Activated CD4-positive, alpha-beta T cell treated with anti-CD3 and anti-CD28 coated beads for 36 hours (primary cell): ENCODE measurements at regions of chr9 and their contacts with region 1.

Region 1: DNA sequence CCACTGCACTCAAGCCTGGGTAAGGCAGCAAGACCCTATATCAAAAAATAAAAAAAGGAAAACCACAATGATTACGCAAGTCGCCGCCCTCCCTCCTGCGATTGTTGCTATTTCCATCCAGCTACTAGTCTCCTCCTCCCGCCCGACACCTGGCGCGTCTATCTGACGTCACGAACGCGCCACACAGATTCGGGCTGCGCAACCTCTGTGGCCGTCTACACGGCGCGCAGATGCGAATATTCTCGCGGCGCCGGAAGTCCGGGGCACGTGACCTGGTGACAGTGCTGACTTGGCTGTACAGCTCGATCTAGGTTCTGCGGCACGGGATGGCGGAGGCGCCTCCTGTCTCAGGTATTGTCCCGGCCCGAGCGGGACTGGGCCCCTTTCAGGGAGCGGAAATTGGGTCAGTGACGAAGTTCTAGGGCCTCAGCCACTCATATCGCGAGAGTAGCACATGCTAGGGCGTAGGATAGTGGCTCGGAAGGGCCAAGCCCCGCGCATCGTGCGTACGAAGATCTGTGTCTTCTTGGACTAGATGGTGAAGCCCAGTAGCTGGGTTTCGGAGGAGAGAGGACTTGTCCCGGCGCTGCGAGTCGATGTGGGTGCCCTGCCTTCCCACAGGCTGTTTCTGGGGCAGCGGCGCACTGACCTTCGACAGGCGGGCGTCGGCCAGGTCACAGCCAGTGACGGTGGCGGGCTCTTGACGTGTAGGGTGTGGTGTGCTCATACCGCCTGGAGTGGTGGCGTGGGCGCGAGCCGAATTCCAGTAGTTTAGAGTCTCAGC is at the start of gene NFX1:
- DNase-seq: peak; percentile 99
- ATAC-seq: peak; percentile 89
- H3K4me3 Mint-ChIP-seq: peak within 1 kb of the TSS; percentile 90
- H3K27ac Mint-ChIP-seq: peak within 1 kb of the TSS; percentile 99
- H3K4me1 Mint-ChIP-seq: peaks cover 64% of the 10 kb centered on the region
- H3K27me3 Mint-ChIP-seq: no peaks in the 10 kb centered on the region
- total RNA-seq, gene NFX1: 31.2 to 33.7 TPM

Region 2: DNA sequence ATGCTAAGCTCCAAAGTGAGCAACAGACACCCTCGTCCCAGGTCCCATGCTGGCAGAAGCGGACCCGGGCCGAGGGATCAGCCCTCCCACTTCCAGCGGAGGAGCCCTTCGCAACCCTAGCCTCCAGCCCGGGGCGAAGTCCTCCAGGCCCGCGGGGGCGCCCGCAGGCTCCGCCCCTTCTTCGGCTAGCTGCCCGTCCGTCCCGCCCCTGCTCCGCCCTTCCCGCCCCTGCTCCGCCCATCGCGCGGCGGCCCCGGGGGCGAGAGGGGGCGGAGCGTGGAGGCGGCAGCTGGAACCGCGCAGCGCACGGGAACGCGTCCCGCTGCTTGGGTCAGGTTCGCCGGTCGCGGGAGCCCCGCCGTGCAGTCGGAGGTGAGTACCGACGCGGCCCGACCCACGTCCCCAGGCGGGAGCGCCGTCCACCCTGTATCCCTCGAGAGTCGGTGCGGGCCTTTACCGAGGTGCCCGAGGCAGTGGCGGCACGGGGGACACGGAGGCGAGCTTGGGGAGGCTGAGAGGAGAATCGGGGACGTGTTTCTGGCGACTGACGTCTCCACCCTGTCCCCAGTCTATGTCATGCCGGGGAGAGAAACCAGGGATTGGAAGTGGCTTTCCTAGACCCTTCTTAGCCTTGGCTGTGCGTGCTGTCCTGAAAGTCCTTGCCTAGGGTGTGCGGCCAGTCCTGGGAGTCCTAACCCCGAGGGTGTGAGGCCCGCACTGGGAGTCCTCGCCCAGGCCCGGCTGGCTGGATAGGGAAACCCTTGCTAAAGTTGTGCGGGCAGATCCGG is 905.9 kb before region 1 on chr9 and contains the start of gene ACO1:
- CTCF ChIA-PET with region 1: no interaction called
- POLR2A ChIA-PET with region 1: no interaction called
- intact Hi-C with region 1: loop called in 1 of 2 experiments (anchors 10 kb)
- DNase-seq: peak; percentile 90
- ATAC-seq: peak; percentile 93
- H3K4me3 Mint-ChIP-seq: peak within 1 kb of the TSS; percentile 78
- H3K27ac Mint-ChIP-seq: peak within 1 kb of the TSS; percentile 16
- H3K4me1 Mint-ChIP-seq: peaks cover 12% of the 10 kb centered on the region
- H3K27me3 Mint-ChIP-seq: peaks cover 16% of the 10 kb centered on the region
- total RNA-seq, gene ACO1: 15.5 TPM

Region 3: DNA sequence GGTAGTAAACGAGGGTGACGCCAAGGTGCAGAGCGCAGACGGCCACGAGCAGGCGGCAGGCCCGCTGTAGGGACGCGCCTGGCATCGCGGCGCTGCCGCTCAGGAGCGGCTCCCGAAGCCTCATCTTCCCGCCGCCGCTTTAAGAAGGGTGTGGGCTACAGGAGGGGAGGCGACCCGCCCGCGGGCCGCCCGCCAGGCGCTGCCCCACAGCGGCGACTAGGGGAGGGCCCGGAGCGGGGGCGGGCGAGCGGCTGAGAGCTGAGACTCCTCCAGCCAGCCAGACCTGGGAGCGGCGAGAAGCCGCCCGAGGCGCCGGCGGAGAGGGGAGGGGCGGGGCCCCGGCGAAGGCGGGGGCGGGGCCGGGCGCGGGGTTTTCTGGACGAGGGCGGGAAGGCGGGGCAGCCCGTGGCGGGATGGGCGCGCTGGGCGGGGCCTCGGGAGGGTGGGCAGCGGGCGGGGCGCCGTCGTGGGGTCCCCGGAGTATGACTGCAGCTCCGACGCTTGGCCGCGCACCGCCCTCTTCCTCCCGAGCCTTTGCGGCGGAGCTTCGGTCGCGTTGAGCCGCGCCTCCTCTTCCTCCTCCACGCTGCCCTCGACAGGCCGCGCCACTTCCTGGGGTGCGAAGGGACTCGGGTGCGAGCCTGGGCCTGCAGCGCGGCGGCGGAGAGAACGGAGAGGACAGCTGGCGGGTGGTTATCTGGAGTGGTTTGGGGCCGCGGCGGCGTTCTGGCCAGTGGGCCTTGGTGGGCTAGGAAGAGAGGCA is 123.2 kb before region 1 on chr9 and contains the start of gene B4GALT1:
- CTCF ChIA-PET with region 1: no interaction called
- POLR2A ChIA-PET with region 1: no interaction called
- intact Hi-C with region 1: loop called (anchors 1 kb)
- DNase-seq: peak; percentile 99
- ATAC-seq: peak; percentile 83
- H3K4me3 Mint-ChIP-seq: peak within 1 kb of the TSS; percentile 95
- H3K27ac Mint-ChIP-seq: peak within 1 kb of the TSS; percentile 97
- H3K4me1 Mint-ChIP-seq: peaks cover 50% of the 10 kb centered on the region
- H3K27me3 Mint-ChIP-seq: no peaks in the 10 kb centered on the region
- total RNA-seq, gene B4GALT1: 44.5 to 47.1 TPM

Region 4: DNA sequence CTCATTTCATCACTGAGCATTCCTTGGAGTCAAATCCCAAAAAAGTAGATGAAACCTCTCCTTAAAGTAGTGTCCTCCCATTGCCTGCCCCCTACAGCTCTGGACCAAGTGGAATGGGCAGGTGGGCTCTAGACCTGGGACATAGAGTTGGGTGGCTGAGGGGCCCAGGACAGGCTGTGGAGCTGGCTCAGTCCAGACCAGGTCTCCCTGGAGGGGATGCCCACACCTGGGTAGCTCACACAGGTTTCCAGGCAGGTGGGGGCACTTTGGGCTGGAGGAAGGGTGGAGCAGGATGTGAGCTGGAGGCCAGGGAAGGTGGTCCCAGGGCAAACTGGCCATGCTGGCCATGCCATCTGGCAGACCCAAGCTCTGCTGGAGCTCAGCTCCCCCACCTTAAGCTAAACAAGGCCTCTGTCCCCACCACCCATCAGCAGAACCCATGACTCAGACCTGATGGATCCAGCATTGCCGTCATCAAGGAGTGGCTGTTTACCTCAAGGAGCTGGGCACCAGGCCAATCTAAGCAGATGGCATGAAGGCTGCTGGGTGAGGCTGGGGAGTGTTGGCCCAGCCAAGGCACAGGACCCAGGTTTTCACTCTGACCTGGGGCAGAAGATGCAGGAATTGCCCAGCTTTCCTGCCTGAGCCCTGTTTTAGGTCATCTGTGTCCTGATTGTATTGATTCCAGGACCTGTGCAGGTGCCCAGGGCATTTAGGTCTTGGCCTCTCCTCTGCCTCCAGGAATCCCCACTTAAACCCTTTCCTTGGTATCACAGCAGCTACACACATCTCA is 56.6 kb before region 1 on chr9:
- CTCF ChIA-PET with region 1: no interaction called
- POLR2A ChIA-PET with region 1: no interaction called
- intact Hi-C with region 1: no loop called
- DNase-seq: peak; percentile 32
- ATAC-seq: peak; percentile 47
- H3K4me3 Mint-ChIP-seq: no peak overlapping the region
- H3K27ac Mint-ChIP-seq: no peak overlapping the region
- H3K4me1 Mint-ChIP-seq: no peaks in the 10 kb centered on the region
- H3K27me3 Mint-ChIP-seq: no peaks in the 10 kb centered on the region

Region 5: GRCh38 chr9:33320568-33321261 is 30.3 kb after region 1 on chr9:
- CTCF ChIA-PET with region 1: interaction called, 13 read pairs
- POLR2A ChIA-PET with region 1: interaction called, 4 read pairs
- intact Hi-C with region 1: loop called (anchors 1 kb)
- DNase-seq: peak; percentile 22
- ATAC-seq: peak; percentile 85
- H3K4me3 Mint-ChIP-seq: no peak overlapping the region
- H3K27ac Mint-ChIP-seq: peak overlapping the region; percentile 80
- H3K4me1 Mint-ChIP-seq: peaks cover 21% of the 10 kb centered on the region
- H3K27me3 Mint-ChIP-seq: no peaks in the 10 kb centered on the region

Region 6: DNA sequence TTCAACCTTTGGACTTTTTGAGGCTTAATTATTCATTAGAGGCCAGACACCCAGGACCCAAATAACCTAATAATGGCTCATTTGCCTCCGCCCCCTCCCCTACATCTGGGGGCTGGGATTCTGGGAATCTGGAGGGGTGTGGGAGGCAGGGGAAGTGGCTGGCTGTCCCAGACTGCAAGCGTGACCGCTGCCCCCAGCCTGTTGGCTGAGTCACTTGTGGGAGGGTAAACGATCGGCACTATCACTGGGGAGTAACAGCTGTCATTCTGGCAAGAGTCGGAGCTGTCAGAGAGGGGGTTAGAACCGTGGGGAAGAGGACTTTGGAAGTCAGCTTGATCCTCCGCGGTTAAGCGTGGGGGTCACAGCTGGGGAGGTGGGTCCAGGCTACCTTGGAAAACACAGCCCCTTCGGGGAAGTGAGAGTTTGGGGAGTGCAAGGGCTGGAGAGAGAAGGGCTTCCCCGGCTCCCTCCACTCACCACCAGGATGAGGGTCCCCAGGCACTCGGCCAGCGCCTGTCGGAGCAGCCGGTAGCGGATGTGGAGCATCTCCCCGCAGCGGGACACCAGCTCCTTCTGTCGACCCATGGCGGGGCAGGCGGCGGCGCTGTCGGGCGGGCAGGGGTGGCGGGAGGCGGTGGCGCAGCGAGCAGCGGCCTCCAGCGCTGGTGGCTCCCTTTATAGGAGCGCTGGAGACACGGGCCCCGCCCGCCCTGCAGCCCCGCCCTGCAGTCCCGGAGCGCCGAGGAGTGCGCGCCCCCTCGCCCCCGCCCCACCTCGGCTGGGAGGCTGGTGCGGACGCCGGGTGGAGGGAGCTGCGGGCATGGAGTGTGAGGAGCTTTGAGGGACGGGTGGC is 156.7 kb after region 1 on chr9 and contains the start of gene AQP3:
- CTCF ChIA-PET with region 1: no interaction called
- POLR2A ChIA-PET with region 1: no interaction called
- intact Hi-C with region 1: loop called (anchors 1 to 5 kb)
- DNase-seq: peak; percentile 85
- ATAC-seq: peak; percentile 68
- H3K4me3 Mint-ChIP-seq: peak within 1 kb of the TSS; percentile 79
- H3K27ac Mint-ChIP-seq: peak within 1 kb of the TSS; percentile 93
- H3K4me1 Mint-ChIP-seq: peaks cover 43% of the 10 kb centered on the region
- H3K27me3 Mint-ChIP-seq: no peaks in the 10 kb centered on the region
- total RNA-seq, gene AQP3: 8.5 to 11.3 TPM

Region 7: DNA sequence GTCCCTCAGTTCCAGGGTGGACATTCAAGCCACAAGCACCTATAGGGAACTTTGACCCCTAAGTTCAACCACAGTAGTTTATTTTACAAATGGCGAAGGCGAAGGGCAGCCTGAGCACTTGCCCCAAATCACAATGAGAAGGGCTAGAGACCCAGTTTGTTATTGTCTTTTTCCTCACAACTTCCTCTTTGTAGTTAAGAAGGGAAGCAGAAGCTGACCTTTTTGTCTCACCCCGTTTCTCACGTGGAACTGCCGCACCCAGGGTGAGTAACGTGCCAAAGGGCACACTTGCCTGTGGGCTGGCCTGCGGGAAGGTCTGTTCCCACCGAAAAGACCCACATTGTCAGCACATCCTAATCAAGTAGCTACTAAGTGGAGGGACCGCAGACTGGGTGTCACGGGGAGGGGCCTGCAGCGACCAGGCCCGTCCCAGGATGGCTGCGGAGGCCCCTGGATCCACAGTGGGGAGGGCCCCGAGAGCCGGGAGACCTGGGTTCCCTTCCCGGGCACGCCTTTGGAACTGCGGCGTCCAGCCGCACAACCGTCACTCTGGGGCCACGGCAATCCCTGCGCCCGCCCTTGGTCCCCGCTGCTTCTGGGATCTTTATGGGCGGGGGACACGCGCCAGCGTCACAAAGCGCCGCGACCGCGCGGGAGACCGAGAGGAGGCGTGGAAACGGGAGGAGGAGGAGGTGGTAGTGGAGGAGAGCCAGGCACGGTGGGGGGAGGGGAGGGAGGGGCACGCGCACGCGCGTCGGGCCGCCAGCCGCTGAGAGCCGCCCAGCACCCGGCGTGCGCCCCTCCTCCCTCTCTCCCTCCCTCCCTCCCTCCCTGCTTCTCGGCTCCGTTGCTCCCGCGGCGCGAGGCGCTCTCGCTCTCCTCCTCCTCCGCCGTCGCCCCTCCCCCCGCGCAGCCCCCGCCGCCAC is 526.2 kb after region 1 on chr9 and contains the start of gene UBE2R2:
- CTCF ChIA-PET with region 1: no interaction called
- POLR2A ChIA-PET with region 1: no interaction called
- intact Hi-C with region 1: loop called in 1 of 2 experiments (anchors 1 kb)
- DNase-seq: peak; percentile 97
- ATAC-seq: peak; percentile 81
- H3K4me3 Mint-ChIP-seq: peak within 1 kb of the TSS; percentile 89
- H3K27ac Mint-ChIP-seq: peak within 1 kb of the TSS; percentile 92
- H3K4me1 Mint-ChIP-seq: peaks cover 56% of the 10 kb centered on the region
- H3K27me3 Mint-ChIP-seq: no peaks in the 10 kb centered on the region
- total RNA-seq, gene UBE2R2: 47.7 to 49.5 TPM